ENCODE measurements at regions of chr6 and their contacts with region 1.

Region 1: GRCh38 chr6:11685152-11686093 is 93.2 kb downstream of the ADTRP start:
- DNase-seq: no peak

Region 2: DNA sequence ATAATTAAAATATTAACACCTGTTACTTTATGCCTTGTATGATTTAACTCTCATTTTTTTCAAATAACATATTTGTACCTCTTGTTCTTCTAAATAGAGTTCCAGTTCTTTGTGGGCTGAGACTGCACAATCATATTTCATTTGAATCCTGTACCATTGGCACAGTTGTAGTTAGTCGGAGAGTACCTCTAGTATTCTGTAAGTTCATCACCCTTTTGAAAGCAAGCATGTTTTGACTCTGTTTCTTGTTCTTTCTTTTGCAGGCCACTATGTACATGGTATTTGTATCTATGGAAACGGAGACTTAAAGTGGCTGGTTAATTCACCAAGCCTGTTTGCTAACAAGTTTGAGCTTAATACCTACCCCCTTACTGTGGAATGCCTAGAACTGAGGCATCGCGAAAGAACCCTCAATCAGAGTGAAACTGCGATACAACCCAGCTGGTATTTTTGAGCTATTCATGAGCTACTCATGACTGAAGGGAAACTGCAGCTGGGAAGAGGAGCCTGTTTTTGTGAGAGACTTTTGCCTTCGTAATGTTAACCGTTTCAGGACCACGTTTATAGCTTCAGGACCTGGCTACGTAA is 1059.2 kb before region 1 on chr6:
- intact Hi-C with region 1: loop called in 1 of 2 experiments (anchors 10 kb)
- DNase-seq: no peak

Region 3: GRCh38 chr6:11833626-11834592 is 148.5 kb after region 1 on chr6:
- intact Hi-C with region 1: no loop called
- DNase-seq: no peak